ENCODE measurements at regions of chr1 and their contacts with region 1.

Region 1: DNA sequence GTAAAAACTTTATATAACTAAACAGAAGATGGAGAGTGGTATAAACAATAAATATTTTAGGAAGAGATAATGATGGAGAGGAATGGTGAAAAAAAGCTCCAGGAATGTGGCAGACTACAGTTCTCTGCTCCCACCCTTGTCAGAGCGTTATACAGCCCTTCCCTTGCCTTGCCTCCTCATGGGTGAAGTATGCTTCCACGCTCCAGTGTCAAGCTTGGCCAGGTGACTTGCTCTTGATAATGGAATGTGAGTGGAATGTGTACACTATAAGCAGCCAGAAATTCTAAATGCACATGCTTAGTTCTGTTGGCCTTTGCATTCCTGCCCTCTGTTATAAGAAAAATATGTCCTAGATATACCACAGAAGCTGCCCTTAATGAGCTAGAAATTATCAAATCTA is 24.7 kb upstream of the POGK start:
- DNase-seq: no peak
- ATAC-seq: no peak
- H3K4me3 ChIP-seq: no peak overlapping the region
- H3K27ac ChIP-seq: no peak overlapping the region
- H3K4me1 ChIP-seq: peaks cover 0 to 8% (median 0%) of the 10 kb centered on the region in 12 donors
- H3K27me3 ChIP-seq: no peaks in the 10 kb centered on the region
- CTCF ChIP-seq: no peak
- POLR2A ChIP-seq: no peak

Region 2: DNA sequence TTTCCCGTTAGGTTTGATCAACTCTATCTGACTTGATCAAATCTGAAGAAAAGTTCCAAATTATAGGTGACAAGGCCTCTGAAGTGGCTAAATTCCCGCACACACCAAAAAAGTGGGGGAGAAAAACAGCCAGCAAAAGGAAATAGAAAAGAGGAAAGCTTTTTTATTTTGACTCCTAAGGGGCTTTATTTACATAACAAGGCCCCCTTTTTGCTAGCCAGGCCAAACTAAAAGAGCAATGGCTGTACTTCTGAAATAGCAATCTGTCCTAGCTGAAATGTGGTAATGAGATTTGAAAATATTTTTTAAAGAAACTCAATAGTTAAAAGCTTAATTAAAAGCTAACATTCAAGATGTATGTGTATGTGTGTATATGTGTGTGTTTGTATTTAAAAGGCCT is 286.9 kb before region 1 on chr1:
- intact Hi-C with region 1: loop called in 1 of 10 experiments (anchors 5 kb)
- DNase-seq: no peak
- ATAC-seq: no peak
- H3K4me3 ChIP-seq: no peak overlapping the region
- H3K27ac ChIP-seq: no peak overlapping the region
- H3K4me1 ChIP-seq: no peaks in the 10 kb centered on the region
- H3K27me3 ChIP-seq: no peaks in the 10 kb centered on the region
- CTCF ChIP-seq: no peak
- POLR2A ChIP-seq: no peak

Region 3: DNA sequence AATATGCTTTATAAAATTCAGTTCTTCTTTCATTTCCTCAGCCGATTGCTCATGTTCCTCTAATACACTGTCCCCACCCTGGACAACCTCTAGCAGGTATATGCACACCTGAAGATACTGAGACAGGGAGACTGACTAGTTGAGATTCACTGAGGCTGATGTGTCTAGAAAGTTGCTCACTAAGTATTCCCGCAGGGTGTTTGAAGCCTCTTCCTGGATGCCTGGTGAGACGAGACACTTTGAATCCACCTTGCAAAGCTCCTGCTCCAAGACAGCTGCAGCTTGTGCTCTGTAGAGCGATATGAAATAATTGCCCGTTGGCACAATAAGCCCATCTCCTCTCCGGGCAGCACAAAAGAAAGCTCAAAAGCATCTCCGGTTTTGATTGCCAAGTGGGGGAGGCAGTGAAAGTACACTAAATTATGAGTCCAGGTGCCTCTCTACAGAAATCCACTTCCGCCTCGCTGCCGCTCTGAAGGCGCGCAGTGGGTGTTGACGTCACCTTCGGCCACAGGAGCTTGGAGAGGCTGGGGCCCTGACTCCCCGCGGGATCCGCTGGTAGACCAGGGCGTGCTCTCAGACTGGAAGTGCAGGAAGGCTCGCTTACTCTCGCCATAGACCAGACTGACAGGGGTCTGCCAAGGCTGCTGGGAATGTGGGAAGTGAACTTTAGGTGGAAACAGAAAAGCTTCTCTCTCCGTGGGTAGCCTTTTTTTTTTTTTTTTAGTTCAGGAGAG is 229.3 kb after region 1 on chr1:
- intact Hi-C with region 1: no loop called
- DNase-seq: peak; percentile 52 to 81 (median 64)
- ATAC-seq: peak; percentile 77 to 96 (median 95)
- H3K4me3 ChIP-seq: peak overlapping the region in 10 of 12 donors; percentile 13 to 51 (median 44)
- H3K27ac ChIP-seq: no peak overlapping the region
- H3K4me1 ChIP-seq: peaks cover 0 to 13% (median 0%) of the 10 kb centered on the region in 12 donors
- H3K27me3 ChIP-seq: peaks cover 0 to 35% (median 0%) of the 10 kb centered on the region in 9 donors
- CTCF ChIP-seq: no peak
- POLR2A ChIP-seq: no peak

Measured in heart left ventricle (tissue), 16 donors.